ENCODE measurements at regions of chr7 and their contacts with region 1.

Region 1: DNA sequence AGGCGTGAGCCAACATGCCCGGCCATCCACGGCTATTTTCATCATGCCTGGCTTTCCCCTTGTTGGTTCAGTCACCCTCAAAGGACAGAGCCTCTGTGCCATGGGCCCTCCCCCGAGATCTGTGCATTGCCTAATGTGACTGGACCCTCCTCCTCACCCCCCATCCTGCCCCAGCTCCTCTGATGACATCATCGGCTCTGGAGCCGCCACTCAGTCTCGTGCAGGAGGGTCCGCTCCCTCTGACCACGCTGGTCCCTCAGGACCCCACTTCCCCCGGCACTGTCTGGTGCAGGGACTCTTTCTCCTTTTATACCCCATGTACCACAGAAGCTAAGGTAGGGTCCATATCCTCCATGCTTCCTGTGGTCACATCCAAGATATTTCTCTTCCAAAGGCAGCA is 33.2 kb upstream of the BAIAP2L1 start:
- DNase-seq: no peak
- H3K4me3 ChIP-seq: no peak overlapping the region
- H3K27ac ChIP-seq: no peak overlapping the region
- H3K4me1 ChIP-seq: no peaks in the 10 kb centered on the region
- H3K27me3 ChIP-seq: peaks cover 13% of the 10 kb centered on the region
- CTCF ChIP-seq: no peak

Region 2: GRCh38 chr7:98186452-98187137 is 247.5 kb before region 1 on chr7:
- intact Hi-C with region 1: no loop called
- DNase-seq: no peak
- H3K4me3 ChIP-seq: no peak overlapping the region
- H3K27ac ChIP-seq: no peak overlapping the region
- H3K4me1 ChIP-seq: no peaks in the 10 kb centered on the region
- H3K27me3 ChIP-seq: no peaks in the 10 kb centered on the region
- CTCF ChIP-seq: no peak

Region 3: GRCh38 chr7:98514211-98515031 is 80.3 kb after region 1 on chr7:
- intact Hi-C with region 1: no loop called
- DNase-seq: no peak
- H3K4me3 ChIP-seq: no peak overlapping the region
- H3K27ac ChIP-seq: no peak overlapping the region
- H3K4me1 ChIP-seq: no peaks in the 10 kb centered on the region
- H3K27me3 ChIP-seq: peaks cover 52% of the 10 kb centered on the region
- CTCF ChIP-seq: no peak

Region 4: GRCh38 chr7:98745722-98746318 is 311.7 kb after region 1 on chr7:
- intact Hi-C with region 1: loop called (anchors 10 kb)
- DNase-seq: peak; percentile 63
- H3K4me3 ChIP-seq: no peak overlapping the region
- H3K27ac ChIP-seq: no peak overlapping the region
- H3K4me1 ChIP-seq: no peaks in the 10 kb centered on the region
- H3K27me3 ChIP-seq: peaks cover 43% of the 10 kb centered on the region
- CTCF ChIP-seq: peak; percentile 83

Region 5: DNA sequence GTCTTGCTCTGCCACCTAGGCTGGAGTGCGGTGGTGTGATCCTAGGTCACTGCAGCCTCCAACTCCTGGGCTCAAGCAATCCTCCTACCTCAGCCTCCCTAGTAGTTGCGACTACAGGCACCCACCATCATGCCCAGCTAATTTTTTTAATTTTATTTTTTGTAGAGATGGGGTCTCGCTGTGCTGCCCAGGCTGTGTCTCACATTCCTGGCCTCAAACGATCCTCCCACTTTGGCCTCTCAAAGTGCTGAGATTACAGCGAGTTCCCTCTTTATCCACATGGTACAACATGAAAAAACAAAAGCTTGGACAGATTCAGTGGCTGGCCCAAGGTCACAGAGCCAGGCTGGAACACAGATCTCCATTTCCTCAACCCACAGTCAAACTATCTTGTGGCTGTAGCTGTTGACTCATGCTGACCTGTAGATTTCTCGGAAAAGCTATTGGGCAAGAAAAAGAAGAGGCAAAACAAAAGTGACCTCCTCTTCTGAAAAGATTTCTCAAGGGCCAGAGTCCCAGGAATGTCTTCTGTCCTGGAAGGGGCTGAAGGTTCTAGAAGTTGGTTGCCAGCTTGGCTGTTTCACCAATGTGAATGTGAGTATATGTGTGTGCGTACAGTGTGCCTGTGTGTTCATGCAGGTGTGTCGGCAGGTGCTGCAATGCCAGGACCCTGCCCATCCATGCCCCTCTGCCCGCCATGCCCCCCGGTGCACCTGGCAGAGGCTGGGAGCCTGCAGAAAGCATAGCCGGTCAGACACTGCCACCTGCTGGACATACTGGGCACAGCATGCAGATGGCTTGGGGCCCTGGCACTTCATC is 407.3 kb after region 1 on chr7:
- intact Hi-C with region 1: loop called (anchors 5 kb)
- DNase-seq: peak; percentile 56
- H3K4me3 ChIP-seq: no peak overlapping the region
- H3K27ac ChIP-seq: no peak overlapping the region
- H3K4me1 ChIP-seq: no peaks in the 10 kb centered on the region
- H3K27me3 ChIP-seq: peaks cover 17% of the 10 kb centered on the region
- CTCF ChIP-seq: peak; percentile 95

Measured in left ventricle myocardium inferior (tissue), 1 donor.